HAP-1 (cell line): ENCODE measurements at regions of chr16 and their contacts with region 1.

Region 1: GRCh38 chr16:71808593-71809459 is at the start of gene AP1G1:
- DNase-seq: peak; percentile 92 to 95
- H3K4me3 ChIP-seq: peak within 1 kb of the TSS; percentile 100
- H3K4me1 ChIP-seq: peaks cover 10% of the 10 kb centered on the region
- H3K27me3 ChIP-seq: no peaks in the 10 kb centered on the region

Region 2: DNA sequence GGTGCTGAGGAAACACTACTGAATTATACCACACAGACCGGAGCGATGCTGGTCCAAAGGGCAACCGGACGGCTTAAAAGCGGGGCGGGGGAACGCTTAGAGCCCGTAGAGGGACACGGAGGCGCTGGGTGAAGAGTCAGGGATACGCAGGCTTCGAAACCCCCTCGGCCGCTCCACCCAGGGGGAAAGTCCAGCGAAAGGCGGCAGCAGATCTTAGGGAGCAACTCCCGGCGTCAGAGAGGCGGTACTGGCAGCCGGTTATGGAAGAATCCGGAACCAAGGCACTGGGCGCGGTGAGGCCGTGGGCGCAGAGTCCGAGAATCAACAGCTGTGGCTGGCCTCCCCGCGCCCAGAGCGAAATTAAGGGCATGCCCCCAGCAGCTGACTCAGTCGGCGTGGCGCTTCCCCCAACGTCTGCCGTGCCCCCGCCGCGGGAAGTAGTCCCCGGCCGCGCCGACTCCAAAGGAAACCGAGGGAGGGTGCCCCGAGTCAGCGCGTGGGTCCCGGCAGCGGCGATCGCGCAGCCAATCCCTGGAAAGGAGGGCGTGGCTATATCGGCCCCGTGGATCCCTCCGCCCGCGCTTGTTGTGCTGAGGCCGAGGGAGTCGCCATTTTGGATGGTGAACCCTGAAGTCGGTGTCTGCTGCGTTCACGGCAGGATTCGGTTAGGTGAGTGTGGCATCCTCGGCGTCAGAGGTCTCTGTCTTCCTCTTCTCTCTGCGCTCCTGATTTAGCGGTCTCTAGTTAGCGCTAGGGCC is 86.3 kb after region 1 on chr16 and contains the start of gene IST1:
- in situ Hi-C with region 1: loop called (anchors 5 kb)
- DNase-seq: peak; percentile 94 to 99
- H3K4me3 ChIP-seq: peak within 1 kb of the TSS; percentile 76
- H3K4me1 ChIP-seq: peaks cover 8% of the 10 kb centered on the region
- H3K27me3 ChIP-seq: no peaks in the 10 kb centered on the region